ENCODE measurements at regions of chr11 and their contacts with region 1.

Region 1: DNA sequence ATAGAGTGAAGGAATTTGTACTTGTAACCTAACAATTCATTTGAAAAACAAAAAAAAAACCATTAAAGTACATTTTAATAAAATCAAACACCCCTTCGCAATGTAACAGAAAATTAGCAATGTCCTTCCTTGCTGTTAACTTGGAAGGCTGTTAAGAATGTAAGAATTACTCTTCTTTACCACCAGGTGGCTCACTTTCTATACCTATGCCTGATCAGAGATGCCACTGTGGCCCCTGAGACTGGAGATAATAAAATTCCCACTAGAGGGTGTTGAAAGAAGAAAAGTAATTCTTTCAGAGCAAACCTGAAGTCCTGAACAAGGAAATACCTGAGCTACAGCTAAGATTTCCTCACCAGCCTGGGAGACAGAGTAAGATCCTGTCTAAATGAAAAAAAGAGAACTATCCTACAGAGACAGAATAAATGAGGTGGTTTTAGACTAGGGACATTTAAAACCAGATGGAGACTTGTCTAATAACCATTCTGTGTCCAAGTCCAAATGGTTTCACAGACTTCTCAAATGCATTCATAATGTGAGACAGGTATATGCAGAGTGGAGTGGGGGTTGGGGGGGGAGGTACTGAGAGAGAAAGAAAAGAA is 1089.3 kb downstream of the FAM181B start:
- DNase-seq: peak in 1 of 10 donors; percentile 14
- H3K4me3 ChIP-seq: no peak overlapping the region
- H3K27ac ChIP-seq: no peak overlapping the region
- H3K27me3 ChIP-seq: peaks cover 0 to under 1% (median 0%) of the 10 kb centered on the region in 45 donors
- CTCF ChIP-seq: peak; percentile 66 to 88 (median 80)

Region 2: GRCh38 chr11:82229341-82229740 is 585.0 kb after region 1 on chr11:
- intact Hi-C with region 1: loop called in 1 of 2 experiments (anchors 5 kb)
- DNase-seq: no peak
- H3K4me3 ChIP-seq: no peak overlapping the region
- H3K27ac ChIP-seq: no peak overlapping the region
- H3K27me3 ChIP-seq: no peaks in the 10 kb centered on the region
- CTCF ChIP-seq: peak in 53 of 56 donors; percentile 8 to 62 (median 36)

Region 3: GRCh38 chr11:82698576-82699352 is 1054.4 kb after region 1 on chr11:
- intact Hi-C with region 1: loop called (anchors 5 to 10 kb)
- DNase-seq: no peak
- H3K4me3 ChIP-seq: no peak overlapping the region
- H3K27ac ChIP-seq: no peak overlapping the region
- H3K27me3 ChIP-seq: no peaks in the 10 kb centered on the region
- CTCF ChIP-seq: no peak